ENCODE measurements at regions of chr22 and their contacts with region 1.

Region 1: DNA sequence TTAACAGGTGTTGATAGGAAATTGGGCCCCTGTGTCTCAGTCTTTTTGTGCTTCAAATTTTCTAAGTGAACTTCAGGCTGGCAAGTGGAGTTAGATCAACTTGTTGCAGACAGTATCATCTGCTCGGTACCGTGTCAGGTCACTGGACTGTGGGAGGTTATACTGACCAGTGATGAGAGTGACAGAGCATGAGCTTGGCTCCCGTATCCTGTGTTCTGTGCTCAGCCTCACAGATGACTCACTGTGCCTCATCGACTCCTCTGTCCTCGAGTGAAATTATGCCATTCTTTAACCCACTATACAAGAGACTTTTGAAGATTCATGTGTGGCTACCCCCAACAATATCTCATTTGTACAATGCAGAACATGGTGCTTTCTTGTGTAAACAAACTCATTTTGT is 7.9 kb downstream of the GRAP2 start:
- DNase-seq: peak; percentile 74
- ATAC-seq: peak; percentile 40
- H3K4me3 Mint-ChIP-seq: peak overlapping the region; percentile 90
- H3K27ac Mint-ChIP-seq: peak overlapping the region; percentile 91
- H3K4me1 Mint-ChIP-seq: peaks cover 61% of the 10 kb centered on the region
- H3K27me3 Mint-ChIP-seq: no peaks in the 10 kb centered on the region

Region 2: GRCh38 chr22:39559454-39560105 is 349.2 kb before region 1 on chr22:
- CTCF ChIA-PET with region 1: no interaction called
- DNase-seq: no peak
- ATAC-seq: no peak
- H3K4me3 Mint-ChIP-seq: no peak overlapping the region
- H3K27ac Mint-ChIP-seq: no peak overlapping the region
- H3K4me1 Mint-ChIP-seq: peaks cover 6% of the 10 kb centered on the region
- H3K27me3 Mint-ChIP-seq: peaks cover 44% of the 10 kb centered on the region

Region 3: DNA sequence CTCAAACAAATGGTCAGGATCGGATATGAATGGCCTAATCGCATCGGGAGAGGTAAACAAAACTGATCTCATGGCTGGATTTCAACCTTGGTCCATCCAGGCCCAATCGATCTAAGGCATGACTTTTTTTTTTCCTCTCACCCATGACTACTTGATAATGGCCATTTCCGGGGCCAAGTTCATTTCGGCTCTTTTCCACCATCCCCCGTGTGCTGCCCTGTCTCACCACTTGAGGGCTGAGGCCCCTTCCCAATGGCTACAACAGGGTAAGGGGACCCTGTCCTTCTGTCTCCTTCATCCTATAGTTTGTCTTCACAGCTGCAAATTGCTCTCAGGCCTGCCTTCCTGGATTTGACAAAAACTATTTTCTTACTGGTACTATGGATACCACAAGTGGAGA is 18.8 kb after region 1 on chr22:
- CTCF ChIA-PET with region 1: interaction called, 171 read pairs
- DNase-seq: peak; percentile 69
- ATAC-seq: peak; percentile 33
- H3K4me3 Mint-ChIP-seq: no peak overlapping the region
- H3K27ac Mint-ChIP-seq: no peak overlapping the region
- H3K4me1 Mint-ChIP-seq: peaks cover 37% of the 10 kb centered on the region
- H3K27me3 Mint-ChIP-seq: no peaks in the 10 kb centered on the region

Measured in activated CD8-positive, alpha-beta memory T cell treated with anti-CD3 and anti-CD28 coated beads, Interleukin-2, amount 10 ng/mL, durations not matched to agents 7 days and 5 days (primary cell).